ENCODE measurements at regions of chr10 and their contacts with region 1.

Region 1: DNA sequence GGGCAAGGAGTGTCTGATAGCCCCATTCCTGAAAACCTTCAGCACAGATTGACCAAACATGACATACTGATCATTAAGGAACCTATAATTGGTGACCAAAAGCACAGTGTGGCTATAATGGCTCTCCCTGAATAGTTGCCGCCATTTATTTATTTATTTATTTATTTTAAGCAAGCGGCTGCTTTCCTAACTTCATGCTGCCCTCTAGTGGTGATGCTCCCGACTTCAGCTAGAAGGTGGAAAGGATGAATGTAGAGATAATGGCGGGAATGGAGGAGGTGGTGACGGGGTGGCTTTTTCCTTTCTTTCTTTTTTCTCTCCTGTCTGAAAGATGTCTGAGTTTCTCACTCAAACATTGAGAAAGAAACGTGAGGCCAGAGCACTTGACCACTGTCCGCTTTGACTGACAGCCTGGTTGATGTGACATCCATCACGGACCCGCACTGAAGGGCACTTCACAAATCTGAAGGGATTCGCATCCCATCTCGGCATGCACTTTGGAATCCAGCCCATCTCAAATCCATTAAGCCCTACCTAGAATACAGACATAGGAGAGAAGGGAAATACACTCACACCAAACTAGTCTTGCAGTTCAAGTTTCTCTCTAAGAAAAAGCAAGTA is 1090.1 kb downstream of the KCNMA1 start:
- DNase-seq: peak; percentile 60
- H3K4me3 ChIP-seq: no peak overlapping the region
- H3K27ac ChIP-seq: peak overlapping the region in 1 of 2 experiments; percentile 34; a peak in 2 of 4 replicates
- H3K4me1 ChIP-seq: peaks cover 10 to 38% of the 10 kb centered on the region in 2 experiments; a peak in 3 of 4 replicates
- H3K27me3 ChIP-seq: no peaks in the 10 kb centered on the region
- CTCF ChIP-seq: peak; percentile 88
- EP300 ChIP-seq: no peak
- RAD21 ChIP-seq: peak; percentile 95

Region 2: GRCh38 chr10:76497666-76498065 is 49.8 kb before region 1 on chr10:
- CTCF ChIA-PET with region 1: no interaction called
- POLR2A ChIA-PET with region 1: no interaction called
- DNase-seq: no peak
- H3K4me3 ChIP-seq: no peak overlapping the region
- H3K27ac ChIP-seq: no peak overlapping the region
- H3K4me1 ChIP-seq: no peaks in the 10 kb centered on the region
- H3K27me3 ChIP-seq: no peaks in the 10 kb centered on the region
- CTCF ChIP-seq: no peak
- EP300 ChIP-seq: no peak
- RAD21 ChIP-seq: no peak

Region 3: DNA sequence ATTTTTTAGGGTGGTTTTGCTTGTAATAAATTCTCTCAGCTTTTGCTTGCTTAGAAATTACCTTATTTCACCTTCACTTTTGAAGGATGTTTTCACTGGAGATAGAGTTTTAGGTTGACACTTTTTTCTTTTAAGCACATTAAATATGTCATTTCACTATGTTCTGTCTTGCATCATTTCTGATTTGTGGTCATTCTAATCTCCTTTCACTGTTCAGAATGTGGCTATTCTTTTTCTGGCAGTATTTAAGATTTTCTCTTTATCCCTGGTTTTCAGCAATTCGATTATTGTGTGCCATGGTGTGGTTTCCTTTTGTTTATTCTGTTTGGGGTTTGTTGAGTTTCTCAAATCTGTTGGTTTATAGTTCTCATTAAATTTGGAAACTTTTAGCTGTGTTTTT is 24.6 kb after region 1 on chr10:
- CTCF ChIA-PET with region 1: no interaction called
- POLR2A ChIA-PET with region 1: no interaction called
- DNase-seq: no peak
- H3K4me3 ChIP-seq: no peak overlapping the region
- H3K27ac ChIP-seq: 0 out of 4 replicates have a peak overlapping the region, but pooled peaks of 1 of the 2 experiments have one; percentile 11
- H3K4me1 ChIP-seq: no peaks in the 10 kb centered on the region; a peak in 2 of 4 replicates
- H3K27me3 ChIP-seq: no peaks in the 10 kb centered on the region
- CTCF ChIP-seq: no peak
- EP300 ChIP-seq: no peak
- RAD21 ChIP-seq: no peak

Region 4: DNA sequence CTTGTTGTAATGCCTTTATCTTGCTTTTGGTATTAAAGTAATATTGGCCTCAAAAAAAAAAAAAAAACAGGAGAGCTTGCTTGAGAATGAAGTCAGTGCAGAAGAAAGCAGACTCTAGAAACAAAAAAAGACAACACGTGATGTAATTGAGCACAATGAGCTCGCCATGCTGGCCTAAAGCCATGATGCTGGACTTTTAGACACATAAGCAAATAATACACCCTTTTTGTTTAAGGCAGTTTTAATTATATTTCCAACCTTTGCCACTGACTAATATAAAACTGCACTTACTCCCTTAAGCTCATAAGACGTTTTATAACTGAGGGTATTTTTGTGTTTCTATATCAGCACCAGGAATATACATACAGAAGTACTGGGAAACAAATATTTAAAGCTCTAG is 291.8 kb after region 1 on chr10:
- CTCF ChIA-PET with region 1: no interaction called
- POLR2A ChIA-PET with region 1: no interaction called
- DNase-seq: no peak
- H3K4me3 ChIP-seq: no peak overlapping the region
- H3K27ac ChIP-seq: no peak overlapping the region
- H3K4me1 ChIP-seq: no peaks in the 10 kb centered on the region
- H3K27me3 ChIP-seq: no peaks in the 10 kb centered on the region; the same call in 1 of the 2 replicates
- CTCF ChIP-seq: no peak
- EP300 ChIP-seq: no peak
- RAD21 ChIP-seq: no peak

Region 5: GRCh38 chr10:76984559-76985443 is 437.3 kb after region 1 on chr10:
- CTCF ChIA-PET with region 1: interaction called, 17 read pairs
- POLR2A ChIA-PET with region 1: no interaction called
- DNase-seq: peak; percentile 57
- H3K4me3 ChIP-seq: peak overlapping the region in 1 of 2 experiments; percentile 17; a peak in 1 of 4 replicates
- H3K27ac ChIP-seq: peak overlapping the region in 1 of 2 experiments; percentile 90; a peak in 2 of 4 replicates
- H3K4me1 ChIP-seq: peaks cover 0 to 21% of the 10 kb centered on the region in 2 experiments; a peak in 2 of 4 replicates
- H3K27me3 ChIP-seq: no peaks in the 10 kb centered on the region
- CTCF ChIP-seq: peak; percentile 99
- EP300 ChIP-seq: peak in 1 of 2 experiments; percentile 44; a peak in 1 of 4 replicates
- RAD21 ChIP-seq: peak; percentile 95